ENCODE measurements at regions of chr10 and their contacts with region 1.

Region 1: GRCh38 chr10:68647672-68648341 is 73.2 kb upstream of the CCAR1 start:
- H3K4me3 Mint-ChIP-seq: no peak overlapping the region
- H3K27ac Mint-ChIP-seq: no peak overlapping the region
- H3K4me1 Mint-ChIP-seq: no peaks in the 10 kb centered on the region
- H3K27me3 Mint-ChIP-seq: no peaks in the 10 kb centered on the region

Region 2: DNA sequence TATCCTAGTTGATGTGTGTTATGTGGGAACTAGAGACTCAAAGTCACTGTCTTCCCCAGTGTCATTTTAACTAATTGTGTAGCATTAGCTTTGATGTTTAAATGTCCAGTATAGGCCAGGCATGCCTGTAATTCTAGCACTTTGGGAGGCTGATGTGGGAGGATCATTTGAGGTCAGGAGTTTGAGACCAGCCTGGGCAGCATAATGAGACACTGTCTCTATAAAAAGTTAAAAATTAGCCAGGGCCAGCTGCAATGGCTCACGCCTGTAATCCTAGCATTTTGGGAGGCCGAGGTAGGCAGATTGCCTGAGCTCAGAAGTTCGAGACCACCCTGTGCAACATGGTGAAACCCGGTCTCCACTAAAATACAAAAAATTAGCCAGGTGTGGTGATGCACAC is 277.7 kb after region 1 on chr10:
- intact Hi-C with region 1: loop called (anchors 5 kb)
- H3K4me3 Mint-ChIP-seq: no peak overlapping the region
- H3K27ac Mint-ChIP-seq: no peak overlapping the region
- H3K4me1 Mint-ChIP-seq: no peaks in the 10 kb centered on the region
- H3K27me3 Mint-ChIP-seq: no peaks in the 10 kb centered on the region